K562 (cell line): ENCODE measurements at regions of chr4 and their contacts with region 1.

Region 1: DNA sequence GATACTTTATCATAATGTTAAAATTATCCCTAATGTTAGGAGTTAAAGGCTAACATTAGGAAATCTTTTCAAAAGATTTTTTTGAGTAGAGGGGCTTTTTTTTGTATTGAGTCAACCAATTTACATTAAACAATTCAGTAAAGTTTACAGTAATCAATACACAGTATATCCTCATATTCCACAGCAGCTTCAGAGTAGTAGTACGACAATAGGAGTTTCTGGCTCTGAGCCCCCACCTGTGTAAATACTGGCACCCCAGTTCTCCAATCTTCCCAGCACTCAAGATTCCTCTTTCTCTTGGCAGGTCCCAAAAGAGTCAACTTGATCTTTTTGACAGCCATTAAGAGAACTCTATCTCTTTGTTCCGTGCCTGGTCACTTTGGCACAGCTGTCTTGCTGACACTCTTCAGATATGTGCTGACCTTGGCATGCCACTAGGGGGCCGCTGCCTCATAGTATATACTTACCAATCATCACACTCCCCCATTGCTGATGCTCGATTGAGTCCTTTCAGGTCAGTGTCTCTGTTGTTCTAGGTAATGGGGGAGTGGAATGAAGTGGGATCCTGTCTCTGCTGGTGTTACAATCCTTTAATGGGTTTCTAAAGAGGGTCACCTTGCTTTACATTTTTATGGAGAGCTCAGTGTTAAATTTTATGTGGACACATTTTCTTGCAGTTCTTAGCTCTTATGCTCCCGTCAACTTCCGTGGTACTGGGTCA is 19.5 kb upstream of the CCNI start:
- DNase-seq: peak; percentile 57 to 69 (median 62)
- ATAC-seq: peak; percentile 99
- H3K4me3 ChIP-seq: no peak overlapping the region
- H3K27ac ChIP-seq: no peak overlapping the region
- H3K4me1 ChIP-seq: no peaks in the 10 kb centered on the region; a peak in 1 of 5 replicates
- H3K27me3 ChIP-seq: peaks cover 0 to 4% of the 10 kb centered on the region in 2 experiments; a peak in 2 of 5 replicates
- CTCF ChIP-seq: peak; percentile 68 to 87 (median 78)
- EP300 ChIP-seq: no peak
- POLR2A ChIP-seq: no peak
- RAD21 ChIP-seq: peak; percentile 64 to 66

Region 2: GRCh38 chr4:77052352-77052751 is 42.9 kb before region 1 on chr4:
- CTCF ChIA-PET with region 1: no interaction called
- POLR2A ChIA-PET with region 1: no interaction called
- in situ Hi-C with region 1: no loop called
- intact Hi-C with region 1: loop called (anchors 5 kb)
- DNase-seq: peak; percentile 47 to 75 (median 56)
- ATAC-seq: peak; percentile 90
- H3K4me3 ChIP-seq: no peak overlapping the region
- H3K27ac ChIP-seq: no peak overlapping the region
- H3K4me1 ChIP-seq: no peaks in the 10 kb centered on the region
- H3K27me3 ChIP-seq: no peaks in the 10 kb centered on the region
- CTCF ChIP-seq: peak; percentile 66 to 80 (median 76)
- EP300 ChIP-seq: no peak
- POLR2A ChIP-seq: no peak
- RAD21 ChIP-seq: peak; percentile 68 to 70

Region 3: DNA sequence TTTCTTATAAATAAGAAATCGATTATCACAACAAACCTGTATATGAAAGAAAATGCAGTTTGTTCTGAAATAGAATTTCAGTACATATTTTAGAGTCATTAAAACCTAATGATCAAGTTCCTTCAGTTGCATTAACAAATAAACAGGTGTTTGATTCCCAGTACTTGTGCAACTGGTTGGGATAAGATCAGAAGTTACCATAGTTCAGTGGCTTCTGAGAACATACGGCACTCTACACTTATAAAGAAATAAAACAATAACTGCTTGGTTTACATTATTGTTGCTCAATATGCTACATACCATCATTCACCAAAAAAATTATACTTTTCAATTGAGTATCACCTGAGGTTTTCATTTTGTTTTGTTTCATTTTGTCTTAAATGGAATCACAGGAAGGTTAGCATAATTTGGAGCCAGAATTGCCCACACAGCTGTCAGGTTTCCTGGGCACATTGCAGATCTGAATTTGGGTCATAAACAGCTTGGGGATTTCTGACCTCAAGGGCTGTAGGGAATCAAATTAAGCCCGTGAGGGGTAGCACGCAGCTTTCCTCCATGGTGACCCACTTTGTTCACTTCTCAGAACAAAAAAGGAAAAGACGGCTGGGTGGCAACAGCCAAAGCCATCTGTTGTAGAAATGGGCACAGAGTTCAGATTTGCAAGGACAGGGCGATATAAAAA is 46.8 kb after region 1 on chr4:
- CTCF ChIA-PET with region 1: no interaction called
- POLR2A ChIA-PET with region 1: no interaction called
- in situ Hi-C with region 1: no loop called
- intact Hi-C with region 1: loop called (anchors 5 kb)
- DNase-seq: no peak
- ATAC-seq: no peak
- H3K4me3 ChIP-seq: no peak overlapping the region
- H3K27ac ChIP-seq: no peak overlapping the region
- H3K4me1 ChIP-seq: peaks cover 0 to 16% of the 10 kb centered on the region in 2 experiments; a peak in 3 of 5 replicates
- H3K27me3 ChIP-seq: peaks cover 4 to 8% of the 10 kb centered on the region in 2 experiments; a peak in 3 of 5 replicates
- CTCF ChIP-seq: no peak
- EP300 ChIP-seq: no peak
- POLR2A ChIP-seq: no peak
- RAD21 ChIP-seq: no peak